ENCODE measurements at regions of chr10 and their contacts with region 1.

Region 1: GRCh38 chr10:77846718-77847630 is 79.6 kb downstream of the DLG5 start:
- DNase-seq: peak; percentile 91
- H3K4me3 ChIP-seq: no peak overlapping the region
- H3K27ac ChIP-seq: peak overlapping the region; percentile 75 to 88 (median 81)
- H3K4me1 ChIP-seq: peaks cover 0 to 60% (median 46%) of the 10 kb centered on the region in 4 donors
- H3K27me3 ChIP-seq: no peaks in the 10 kb centered on the region
- CTCF ChIP-seq: peak; percentile 93 to 98 (median 96)
- EP300 ChIP-seq: no peak
- POLR2A ChIP-seq: no peak

Region 2: GRCh38 chr10:77873536-77874380 is 26.8 kb after region 1 on chr10:
- intact Hi-C with region 1: loop called (anchors 2 kb)
- DNase-seq: peak; percentile 91
- H3K4me3 ChIP-seq: no peak overlapping the region
- H3K27ac ChIP-seq: peak overlapping the region; percentile 80 to 91 (median 83)
- H3K4me1 ChIP-seq: peaks cover 0 to 87% (median 83%) of the 10 kb centered on the region in 4 donors
- H3K27me3 ChIP-seq: no peaks in the 10 kb centered on the region
- CTCF ChIP-seq: no peak
- EP300 ChIP-seq: peak; percentile 36 to 97 (median 82)
- POLR2A ChIP-seq: no peak

Region 3: GRCh38 chr10:77926566-77927401 is 79.8 kb after region 1 on chr10 and contains the start of gene DLG5:
- intact Hi-C with region 1: loop called (anchors 2 kb)
- DNase-seq: peak; percentile 92
- H3K4me3 ChIP-seq: peak within 1 kb of the TSS; percentile 64 to 87 (median 74)
- H3K27ac ChIP-seq: peak within 1 kb of the TSS; percentile 88 to 95 (median 91)
- H3K4me1 ChIP-seq: peaks cover 0 to 54% (median 42%) of the 10 kb centered on the region in 4 donors
- H3K27me3 ChIP-seq: no peaks in the 10 kb centered on the region
- CTCF ChIP-seq: no peak
- EP300 ChIP-seq: no peak
- POLR2A ChIP-seq: no peak
- total RNA-seq, gene DLG5: 41.0 to 78.1 (median 49.4) TPM

Region 4: GRCh38 chr10:77970869-77971803 is 124.2 kb after region 1 on chr10:
- intact Hi-C with region 1: loop called (anchors 1 kb)
- DNase-seq: peak; percentile 97
- H3K4me3 ChIP-seq: peak overlapping the region in 1 of 4 donors; percentile 14
- H3K27ac ChIP-seq: peak overlapping the region; percentile 79 to 93 (median 90)
- H3K4me1 ChIP-seq: peaks cover 0 to 62% (median 56%) of the 10 kb centered on the region in 4 donors
- H3K27me3 ChIP-seq: no peaks in the 10 kb centered on the region
- CTCF ChIP-seq: no peak
- EP300 ChIP-seq: peak; percentile 96 to 99 (median 97)
- POLR2A ChIP-seq: no peak

Region 5: GRCh38 chr10:78029269-78030226 is 182.6 kb after region 1 on chr10 and contains the start of gene POLR3A:
- intact Hi-C with region 1: loop called (anchors 2 kb)
- DNase-seq: peak; percentile 99
- H3K4me3 ChIP-seq: peak within 1 kb of the TSS; percentile 60 to 98 (median 80)
- H3K27ac ChIP-seq: peak within 1 kb of the TSS; percentile 81 to 88 (median 86)
- H3K4me1 ChIP-seq: peaks cover 0 to 35% (median 24%) of the 10 kb centered on the region in 4 donors
- H3K27me3 ChIP-seq: no peaks in the 10 kb centered on the region
- CTCF ChIP-seq: peak; percentile 78 to 91 (median 80)
- EP300 ChIP-seq: no peak
- POLR2A ChIP-seq: peak; percentile 23 to 33
- total RNA-seq, gene POLR3A: 9.6 to 13.0 (median 11.0) TPM